ENCODE measurements at regions of chr20 and their contacts with region 1.

Region 1: GRCh38 chr20:48723308-48724264 is 104.2 kb downstream of the PREX1 start:
- DNase-seq: no peak
- ATAC-seq: no peak
- H3K4me3 Mint-ChIP-seq: no peak overlapping the region
- H3K27ac Mint-ChIP-seq: peak overlapping the region; percentile 91
- H3K4me1 Mint-ChIP-seq: peaks cover 63% of the 10 kb centered on the region
- H3K27me3 Mint-ChIP-seq: no peaks in the 10 kb centered on the region

Region 2: DNA sequence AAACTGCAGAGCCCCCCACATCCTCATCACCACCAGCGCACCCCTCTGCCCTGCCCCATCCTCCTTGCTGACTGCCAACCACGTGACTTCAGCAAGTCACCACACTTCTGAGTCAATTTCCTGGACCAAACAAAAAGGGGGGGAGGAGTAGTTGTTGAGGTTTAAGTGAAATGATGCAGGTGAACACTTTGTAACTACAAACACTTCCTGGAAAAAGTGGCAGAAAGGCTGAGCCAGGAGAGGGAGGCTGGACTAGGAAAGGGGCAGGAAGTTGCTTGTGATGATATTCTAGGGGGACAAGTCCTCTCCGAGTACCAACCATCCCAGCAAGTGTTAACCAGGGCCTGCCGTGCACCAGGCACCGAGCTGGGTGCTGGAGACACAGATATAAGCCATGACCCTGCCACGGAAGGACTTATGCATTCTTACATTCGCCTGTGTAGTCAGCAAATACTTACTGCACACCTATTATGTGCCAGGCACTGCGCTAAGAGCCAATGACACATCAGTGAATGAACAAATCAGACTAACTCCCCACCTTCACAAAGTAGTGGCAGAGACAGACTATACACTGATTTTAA is 36.9 kb after region 1 on chr20:
- POLR2A ChIA-PET with region 1: interaction called, 37 read pairs
- DNase-seq: peak; percentile 67
- ATAC-seq: peak; percentile 77
- H3K4me3 Mint-ChIP-seq: peak overlapping the region; percentile 77
- H3K27ac Mint-ChIP-seq: peak overlapping the region; percentile 96
- H3K4me1 Mint-ChIP-seq: peaks cover 75% of the 10 kb centered on the region
- H3K27me3 Mint-ChIP-seq: no peaks in the 10 kb centered on the region